HepG2 (cell line): ENCODE measurements at regions of chr2 and their contacts with region 1.

Region 1: DNA sequence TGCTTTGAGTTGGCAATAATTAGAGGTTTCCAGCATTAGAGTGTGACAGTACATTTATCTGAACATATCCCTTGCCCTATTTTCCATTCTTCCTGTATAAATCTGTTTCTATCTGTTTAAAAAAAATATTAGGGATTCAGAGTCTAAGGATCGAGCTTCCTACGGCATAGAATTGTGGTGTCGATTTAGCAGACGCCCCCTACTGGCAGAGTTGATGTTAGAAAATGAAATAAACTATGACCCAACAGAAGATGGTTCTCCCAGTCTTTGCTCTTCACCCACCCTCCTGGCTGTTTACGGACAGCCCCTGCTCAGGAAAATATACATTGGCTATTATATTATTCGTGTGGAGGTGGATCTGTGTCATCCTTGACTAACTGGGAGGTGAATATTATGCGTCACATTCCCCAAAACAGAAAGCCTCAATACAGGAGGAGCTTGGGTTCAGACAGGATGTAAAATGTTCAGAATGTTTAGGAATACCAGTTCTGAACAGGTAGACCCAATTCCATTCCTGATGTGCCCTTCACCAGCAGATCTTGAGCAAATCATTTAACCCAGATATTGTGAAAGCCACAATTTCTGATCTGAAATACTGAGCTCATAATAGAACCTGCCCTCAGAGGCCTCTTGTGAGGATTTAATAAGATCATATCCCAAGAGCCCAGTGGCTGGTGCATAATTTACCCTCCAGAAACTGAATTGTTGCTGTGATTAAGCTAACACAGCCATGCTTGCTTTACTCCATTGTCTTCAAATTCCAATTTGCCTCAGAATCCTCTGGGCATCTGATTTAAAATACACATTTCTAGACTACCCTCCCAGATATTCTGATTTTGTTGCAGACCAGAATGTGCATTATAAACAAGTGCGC is 10.8 kb upstream of the ERMN start:
- DNase-seq: peak; percentile 44
- ATAC-seq: peak; percentile 93
- H3K4me3 ChIP-seq: no peak overlapping the region
- H3K27ac ChIP-seq: no peak overlapping the region
- H3K4me1 ChIP-seq: no peaks in the 10 kb centered on the region
- H3K27me3 ChIP-seq: no peaks in the 10 kb centered on the region
- CTCF ChIP-seq: peak; percentile 69
- EP300 ChIP-seq: no peak
- POLR2A ChIP-seq: no peak
- RAD21 ChIP-seq: no peak

Region 2: DNA sequence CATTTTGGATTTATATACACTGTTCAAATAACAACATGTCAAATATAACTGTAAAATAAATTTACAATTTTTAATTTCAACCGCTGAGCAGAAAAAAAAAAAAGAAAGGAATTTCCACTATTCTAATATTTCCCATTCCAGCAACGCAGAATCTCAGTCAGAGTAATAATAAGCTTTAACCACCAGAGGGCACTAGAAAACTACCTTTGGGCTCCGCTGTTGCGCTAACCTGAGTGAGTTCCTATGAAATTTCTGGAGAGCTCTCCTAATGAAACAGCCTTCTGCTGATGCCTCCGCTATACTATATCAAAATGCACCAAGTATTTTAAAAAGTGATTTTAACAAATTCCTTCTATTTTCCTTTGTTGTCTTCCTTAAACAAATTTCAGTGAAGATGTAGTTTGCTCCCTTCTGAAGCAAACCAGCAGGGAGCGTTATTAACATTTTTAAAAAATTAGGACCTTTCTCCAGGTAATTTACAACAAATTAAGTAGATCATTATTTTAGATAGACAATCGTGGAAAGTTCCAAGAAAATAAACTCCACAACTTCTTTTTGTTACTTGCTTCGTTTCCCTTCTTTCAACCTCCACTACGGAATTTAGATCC is 33.8 kb before region 1 on chr2:
- CTCF ChIA-PET with region 1: interaction called, 11 read pairs
- POLR2A ChIA-PET with region 1: no interaction called
- in situ Hi-C with region 1: no loop called
- intact Hi-C with region 1: loop called (anchors 1 kb)
- DNase-seq: peak; percentile 56
- ATAC-seq: peak; percentile 94
- H3K4me3 ChIP-seq: no peak overlapping the region
- H3K27ac ChIP-seq: no peak overlapping the region
- H3K4me1 ChIP-seq: no peaks in the 10 kb centered on the region
- H3K27me3 ChIP-seq: peaks cover 0 to 16% of the 10 kb centered on the region in 2 experiments; a peak in 1 of 5 replicates
- CTCF ChIP-seq: peak; percentile 76
- EP300 ChIP-seq: no peak
- POLR2A ChIP-seq: no peak
- RAD21 ChIP-seq: peak; percentile 67; the same call in 1 of the 2 replicates

Region 3: GRCh38 chr2:157321466-157321865 is 14.9 kb before region 1 on chr2:
- CTCF ChIA-PET with region 1: no interaction called
- POLR2A ChIA-PET with region 1: no interaction called
- in situ Hi-C with region 1: no loop called
- intact Hi-C with region 1: no loop called
- DNase-seq: no peak
- ATAC-seq: no peak
- H3K4me3 ChIP-seq: no peak overlapping the region
- H3K27ac ChIP-seq: no peak overlapping the region
- H3K4me1 ChIP-seq: no peaks in the 10 kb centered on the region
- H3K27me3 ChIP-seq: no peaks in the 10 kb centered on the region
- CTCF ChIP-seq: no peak
- EP300 ChIP-seq: no peak
- POLR2A ChIP-seq: no peak
- RAD21 ChIP-seq: no peak

Region 4: DNA sequence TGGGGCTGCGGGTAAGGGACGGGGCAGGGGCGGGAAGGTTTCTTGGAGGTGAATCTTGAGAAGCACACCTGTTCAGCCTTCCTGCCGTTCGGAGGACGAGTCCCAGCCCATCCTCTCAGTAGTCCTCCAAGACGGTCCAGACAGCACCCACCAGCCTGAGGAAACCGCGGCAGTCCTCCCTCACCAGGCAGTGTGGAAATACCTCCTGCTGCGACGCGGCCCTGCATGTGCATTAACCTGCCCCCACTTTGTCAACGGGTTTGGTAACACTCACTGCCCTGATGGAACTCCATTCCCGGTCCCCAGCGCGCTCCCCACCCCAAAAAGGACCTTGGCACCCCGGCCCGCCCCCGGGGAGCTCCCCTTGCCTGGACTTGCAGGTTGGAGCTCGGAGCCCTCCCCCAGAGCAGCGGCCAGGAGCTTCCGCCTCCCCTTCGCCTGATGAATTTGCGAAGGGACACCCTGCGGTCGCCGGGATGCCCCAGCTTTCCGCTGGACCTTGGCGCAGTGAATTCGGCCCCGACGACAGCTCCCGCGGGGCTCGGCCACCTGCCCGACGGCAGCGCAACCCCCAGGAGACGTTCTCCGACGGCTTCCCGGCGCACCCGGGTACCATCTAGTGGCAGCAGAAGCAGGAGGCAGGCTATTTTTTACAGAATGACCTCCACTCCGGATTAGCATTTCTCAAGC is 260.8 kb after region 1 on chr2:
- CTCF ChIA-PET with region 1: no interaction called
- POLR2A ChIA-PET with region 1: no interaction called
- in situ Hi-C with region 1: no loop called
- intact Hi-C with region 1: no loop called
- DNase-seq: no peak
- ATAC-seq: peak; percentile 90
- H3K4me3 ChIP-seq: no peak overlapping the region
- H3K27ac ChIP-seq: no peak overlapping the region
- H3K4me1 ChIP-seq: no peaks in the 10 kb centered on the region
- H3K27me3 ChIP-seq: no peaks in the 10 kb centered on the region
- CTCF ChIP-seq: peak; percentile 61
- EP300 ChIP-seq: no peak
- POLR2A ChIP-seq: no peak
- RAD21 ChIP-seq: peak; percentile 39; the same call in 1 of the 2 replicates